ENCODE measurements at regions of chr16 and their contacts with region 1.

Region 1: DNA sequence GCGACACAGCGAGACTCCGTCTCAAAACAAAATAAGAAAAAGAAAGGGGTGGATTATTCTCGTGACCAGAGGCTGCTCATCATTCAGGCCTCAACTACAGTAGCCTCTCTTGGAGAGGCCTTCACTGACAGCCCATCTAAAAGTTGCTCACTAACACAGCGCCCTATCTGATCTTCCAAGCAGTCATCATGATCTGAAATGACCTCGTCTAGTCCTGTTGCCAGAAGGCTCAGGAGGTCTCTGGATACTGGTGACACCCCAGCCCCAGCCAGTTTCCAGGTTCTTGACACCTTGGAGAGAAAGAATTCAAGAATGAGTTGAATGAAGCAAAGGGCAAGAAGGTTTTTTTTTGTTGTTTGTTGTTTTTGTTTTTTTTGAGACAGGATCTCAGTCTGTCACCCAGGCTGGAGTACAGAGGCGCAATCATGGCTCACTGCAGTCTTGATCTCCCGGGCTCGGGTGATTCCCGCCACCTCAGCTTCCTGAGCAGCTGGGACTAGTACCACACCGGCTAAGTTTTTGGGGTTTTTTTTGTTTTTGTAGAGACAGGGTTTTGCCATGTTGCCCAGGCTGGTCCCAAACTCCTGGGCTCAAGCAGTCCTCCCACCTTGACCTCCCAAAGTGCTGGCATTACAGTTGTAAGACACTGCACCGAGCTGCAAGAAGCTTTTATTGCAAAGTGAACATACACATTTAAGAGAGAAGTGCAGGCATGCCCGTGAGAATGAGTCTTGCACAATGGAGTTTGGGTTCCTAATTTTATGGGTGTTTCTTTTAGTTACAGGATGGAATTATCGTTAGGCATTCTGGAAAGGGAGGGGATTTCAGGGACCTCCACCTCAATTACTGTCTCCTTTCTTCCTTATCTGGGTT is 2.7 kb upstream of the ZC3H7A start:
- DNase-seq: no peak
- H3K4me3 ChIP-seq: no peak overlapping the region
- H3K4me1 ChIP-seq: peaks cover 22% of the 10 kb centered on the region
- H3K27me3 ChIP-seq: no peaks in the 10 kb centered on the region

Region 2: DNA sequence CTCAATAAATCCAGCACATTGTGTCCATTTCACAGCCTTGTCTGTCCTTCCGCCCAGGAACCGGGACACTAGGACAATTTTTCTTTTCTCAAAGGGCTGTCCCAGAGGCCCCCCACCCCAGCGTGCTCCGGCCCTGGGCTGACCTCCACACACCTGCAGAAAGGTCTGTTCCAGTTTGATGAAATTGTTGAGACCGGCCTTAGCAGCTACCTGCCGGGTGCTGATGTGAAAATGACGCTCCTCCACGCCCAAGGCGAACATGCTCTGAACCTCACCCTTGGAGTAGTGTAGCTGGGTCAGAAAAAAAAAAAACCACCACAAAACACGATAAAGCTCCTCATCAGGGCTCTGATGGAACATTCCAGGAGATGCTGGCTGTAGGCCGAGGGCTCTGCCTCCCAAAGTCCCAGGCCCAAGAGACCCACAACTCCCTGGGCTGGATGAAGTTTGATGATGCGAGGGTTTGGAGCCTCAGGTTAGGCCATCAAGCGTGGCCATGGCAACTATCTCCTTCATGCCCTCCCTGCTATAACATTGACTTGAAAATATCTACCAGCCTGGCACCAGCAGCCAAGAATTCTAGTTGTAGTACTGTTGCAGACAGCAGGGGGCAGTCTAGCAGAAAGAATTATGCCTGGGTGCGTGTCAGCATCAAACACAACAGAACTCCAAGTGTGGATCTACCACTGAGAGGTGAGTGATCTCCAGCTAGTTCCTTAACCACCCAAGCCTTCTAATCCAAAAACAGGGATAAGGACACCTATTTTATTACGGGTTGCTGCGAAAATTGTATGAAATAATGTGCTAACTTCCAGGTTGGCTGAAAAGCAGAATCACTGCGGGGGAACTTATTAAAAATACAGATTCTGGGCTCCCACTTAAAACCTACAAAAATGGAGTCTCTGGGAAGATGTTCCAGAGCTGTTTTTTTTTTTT is 392.4 kb before region 1 on chr16:
- in situ Hi-C with region 1: loop called (anchors 25 kb)
- DNase-seq: peak; percentile 59 to 83
- H3K4me3 ChIP-seq: no peak overlapping the region
- H3K4me1 ChIP-seq: no peaks in the 10 kb centered on the region
- H3K27me3 ChIP-seq: no peaks in the 10 kb centered on the region

Region 3: DNA sequence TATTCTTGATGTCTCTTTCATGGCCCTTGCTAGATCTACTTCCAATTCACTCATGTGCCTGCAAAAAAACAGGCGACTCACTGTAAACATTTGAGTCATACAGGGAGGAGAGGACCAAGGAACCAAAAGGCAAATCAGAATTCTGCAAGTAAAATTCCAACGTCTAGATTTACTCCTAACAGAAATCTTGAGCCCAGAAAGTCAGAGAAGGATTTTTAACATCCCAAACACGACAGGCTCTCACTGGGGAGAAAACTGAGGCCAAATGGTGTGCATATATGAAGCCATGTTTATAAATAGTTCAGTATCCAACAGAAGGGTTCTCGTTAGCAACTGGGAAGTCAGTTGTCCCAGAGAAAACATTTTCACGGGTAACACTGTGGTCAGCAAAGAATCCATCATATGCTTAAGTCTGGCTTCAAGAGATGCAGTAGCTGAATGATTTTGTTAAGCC is 253.1 kb before region 1 on chr16:
- in situ Hi-C with region 1: loop called (anchors 25 kb)
- DNase-seq: no peak
- H3K4me3 ChIP-seq: no peak overlapping the region
- H3K4me1 ChIP-seq: peaks cover 15% of the 10 kb centered on the region
- H3K27me3 ChIP-seq: no peaks in the 10 kb centered on the region

Measured in HAP-1 (cell line).